Activated CD4-positive, alpha-beta T cell treated with anti-CD3 and anti-CD28 coated beads, Interleukin-2, amount 10 ng/mL, durations not matched to agents 24 days and 14 days (primary cell): ENCODE measurements at regions of chr6 and their contacts with region 1.

Region 1: GRCh38 chr6:3023663-3024483 is 24.2 kb downstream of the NQO2 start:
- DNase-seq: peak; percentile 96
- H3K4me3 Mint-ChIP-seq: peak overlapping the region; percentile 94
- H3K27ac Mint-ChIP-seq: peak overlapping the region; percentile 97
- H3K4me1 Mint-ChIP-seq: peaks cover 60% of the 10 kb centered on the region
- H3K27me3 Mint-ChIP-seq: no peaks in the 10 kb centered on the region

Region 2: GRCh38 chr6:3052481-3053230 is 28.8 kb after region 1 on chr6:
- intact Hi-C with region 1: loop called (anchors 1 kb)
- DNase-seq: no peak
- H3K4me3 Mint-ChIP-seq: peak overlapping the region; percentile 82
- H3K27ac Mint-ChIP-seq: peak overlapping the region; percentile 68
- H3K4me1 Mint-ChIP-seq: peaks cover 28% of the 10 kb centered on the region
- H3K27me3 Mint-ChIP-seq: peaks cover 10% of the 10 kb centered on the region